ENCODE measurements at regions of chr15 and their contacts with region 1.

Region 1: DNA sequence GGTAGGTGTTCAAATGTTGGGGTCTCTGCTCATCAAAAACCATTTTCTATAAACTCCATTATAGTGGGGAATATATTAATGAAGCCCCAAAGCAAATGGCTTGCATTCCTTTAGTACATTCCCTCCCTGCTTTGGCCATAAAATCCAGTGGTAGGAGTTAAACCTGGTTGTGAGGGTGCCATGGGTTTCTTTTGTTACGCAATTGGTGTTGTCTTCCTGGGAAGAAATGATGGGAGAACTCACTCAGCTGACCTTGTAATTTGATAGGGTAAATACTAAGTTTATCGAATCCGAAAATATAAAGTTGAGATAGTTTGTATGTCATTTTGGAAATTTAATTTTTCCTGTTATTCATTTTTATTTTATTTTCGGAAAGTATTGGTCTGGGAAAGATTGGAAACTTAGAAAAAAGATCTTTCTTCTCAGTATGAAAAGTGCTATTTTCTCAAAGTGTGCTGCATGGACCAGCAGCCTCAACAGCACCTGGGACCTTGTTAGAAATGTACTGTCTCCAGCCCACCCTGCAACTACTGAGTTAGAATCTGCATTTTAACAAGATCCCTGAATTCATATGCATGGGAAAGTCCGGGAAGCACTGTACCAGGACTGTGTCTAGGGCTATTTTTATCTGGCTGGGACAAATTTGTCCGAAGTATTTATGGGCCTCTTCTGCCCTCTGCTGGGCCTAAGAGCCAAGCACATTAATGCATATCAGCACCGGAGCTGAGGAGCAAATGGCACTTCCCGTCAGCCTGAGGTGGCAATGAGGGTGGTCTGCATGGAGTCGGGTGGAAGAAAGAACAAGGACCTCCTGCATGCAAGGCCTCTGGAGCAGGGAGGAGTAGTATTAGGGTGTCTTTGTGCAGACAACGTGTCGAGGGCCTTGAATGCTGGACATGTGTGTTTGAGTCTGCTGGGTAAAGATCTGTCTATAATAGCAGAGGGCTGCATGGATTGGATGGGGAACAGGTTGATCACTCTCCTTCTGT is 54.7 kb downstream of the FAM81A start:
- DNase-seq: peak; percentile 56
- ATAC-seq: peak; percentile 99
- H3K4me3 ChIP-seq: no peak overlapping the region
- H3K27ac ChIP-seq: no peak overlapping the region
- H3K4me1 ChIP-seq: no peaks in the 10 kb centered on the region
- H3K27me3 ChIP-seq: no peaks in the 10 kb centered on the region
- CTCF ChIP-seq: peak; percentile 88

Region 2: DNA sequence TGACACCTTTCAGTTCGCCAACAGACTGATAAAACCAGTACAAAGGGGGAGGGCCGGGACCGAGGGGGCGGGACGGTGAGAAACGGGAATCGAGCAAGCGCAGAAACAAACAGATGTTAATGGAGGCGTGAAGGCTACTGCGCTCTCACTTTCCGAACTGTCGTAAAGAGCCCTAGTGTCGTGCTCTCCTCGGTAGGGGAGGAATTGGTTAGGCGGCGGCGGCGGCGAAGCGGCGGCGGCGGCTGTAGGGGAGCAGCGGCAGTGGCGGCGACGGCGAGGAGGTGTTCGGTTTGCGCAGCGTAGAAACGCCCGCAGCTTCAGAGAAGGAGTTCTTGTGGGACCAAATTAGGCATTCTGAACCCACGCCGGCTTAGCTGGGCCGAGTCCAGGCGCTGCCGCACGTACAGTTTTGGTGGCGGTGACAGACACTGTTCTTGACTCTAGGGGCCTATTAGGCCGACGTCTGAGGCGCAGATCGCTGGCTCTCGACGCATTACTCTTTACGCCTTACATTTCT is 505.1 kb before region 1 on chr15 and contains the start of gene RNF111:
- CTCF ChIA-PET with region 1: no interaction called
- POLR2A ChIA-PET with region 1: no interaction called
- in situ Hi-C with region 1: no loop called
- intact Hi-C with region 1: loop called (anchors 10 kb)
- DNase-seq: peak; percentile 87
- ATAC-seq: peak; percentile 96
- H3K4me3 ChIP-seq: peak within 1 kb of the TSS; percentile 69 to 96
- H3K27ac ChIP-seq: peak within 1 kb of the TSS; percentile 91
- H3K4me1 ChIP-seq: peaks cover 10% of the 10 kb centered on the region
- H3K27me3 ChIP-seq: no peaks in the 10 kb centered on the region
- CTCF ChIP-seq: no peak
- total RNA-seq, gene RNF111: 37.2 TPM

Region 3: GRCh38 chr15:59174835-59175831 is 317.6 kb before region 1 on chr15:
- CTCF ChIA-PET with region 1: no interaction called
- POLR2A ChIA-PET with region 1: no interaction called
- in situ Hi-C with region 1: no loop called
- intact Hi-C with region 1: loop called (anchors 5 kb)
- DNase-seq: peak; percentile 32
- ATAC-seq: peak; percentile 92
- H3K4me3 ChIP-seq: no peak overlapping the region
- H3K27ac ChIP-seq: 0 out of 2 replicates have a peak overlapping the region, but pooled peaks have one; percentile 36
- H3K4me1 ChIP-seq: peaks cover 9% of the 10 kb centered on the region
- H3K27me3 ChIP-seq: no peaks in the 10 kb centered on the region
- CTCF ChIP-seq: peak; percentile 82

Region 4: GRCh38 chr15:59247364-59247763 is 245.3 kb before region 1 on chr15:
- CTCF ChIA-PET with region 1: interaction called, 4 read pairs
- POLR2A ChIA-PET with region 1: no interaction called
- in situ Hi-C with region 1: no loop called
- intact Hi-C with region 1: loop called (anchors 2 kb)
- DNase-seq: peak; percentile 56
- ATAC-seq: peak; percentile 85
- H3K4me3 ChIP-seq: no peak overlapping the region
- H3K27ac ChIP-seq: peak overlapping the region; percentile 53
- H3K4me1 ChIP-seq: peaks cover 9% of the 10 kb centered on the region
- H3K27me3 ChIP-seq: no peaks in the 10 kb centered on the region
- CTCF ChIP-seq: peak; percentile 78

Region 5: GRCh38 chr15:59372352-59373211 is 120.1 kb before region 1 on chr15 and contains the start of gene MYO1E:
- CTCF ChIA-PET with region 1: interaction called, 4 read pairs
- POLR2A ChIA-PET with region 1: no interaction called
- in situ Hi-C with region 1: no loop called
- intact Hi-C with region 1: loop called (anchors 2 kb)
- DNase-seq: peak; percentile 96
- ATAC-seq: peak; percentile 95
- H3K4me3 ChIP-seq: peak within 1 kb of the TSS; percentile 89 to 91
- H3K27ac ChIP-seq: peak within 1 kb of the TSS; percentile 89
- H3K4me1 ChIP-seq: peaks cover 20% of the 10 kb centered on the region
- H3K27me3 ChIP-seq: no peaks in the 10 kb centered on the region
- CTCF ChIP-seq: no peak
- total RNA-seq, gene MYO1E: 161 TPM

Measured in Panc1 (cell line).